Activated CD4-positive, alpha-beta T cell treated with anti-CD3 and anti-CD28 coated beads for 36 hours (primary cell): ENCODE measurements at regions of chr10 and their contacts with region 1.

Region 1: GRCh38 chr10:5283305-5284158 is 81.2 kb upstream of the UCN3 start:
- DNase-seq: peak; percentile 78
- ATAC-seq: peak; percentile 83
- H3K4me3 Mint-ChIP-seq: no peak overlapping the region
- H3K27ac Mint-ChIP-seq: peak overlapping the region; percentile 74
- H3K4me1 Mint-ChIP-seq: peaks cover 21% of the 10 kb centered on the region
- H3K27me3 Mint-ChIP-seq: peaks cover 7% of the 10 kb centered on the region

Region 2: GRCh38 chr10:4813023-4813422 is 470.5 kb before region 1 on chr10:
- CTCF ChIA-PET with region 1: interaction called, 3 read pairs
- POLR2A ChIA-PET with region 1: no interaction called
- intact Hi-C with region 1: loop called (anchors 1 to 10 kb)
- DNase-seq: peak; percentile 13
- ATAC-seq: no peak
- H3K4me3 Mint-ChIP-seq: no peak overlapping the region
- H3K27ac Mint-ChIP-seq: no peak overlapping the region
- H3K4me1 Mint-ChIP-seq: no peaks in the 10 kb centered on the region
- H3K27me3 Mint-ChIP-seq: peaks cover 6% of the 10 kb centered on the region

Region 3: DNA sequence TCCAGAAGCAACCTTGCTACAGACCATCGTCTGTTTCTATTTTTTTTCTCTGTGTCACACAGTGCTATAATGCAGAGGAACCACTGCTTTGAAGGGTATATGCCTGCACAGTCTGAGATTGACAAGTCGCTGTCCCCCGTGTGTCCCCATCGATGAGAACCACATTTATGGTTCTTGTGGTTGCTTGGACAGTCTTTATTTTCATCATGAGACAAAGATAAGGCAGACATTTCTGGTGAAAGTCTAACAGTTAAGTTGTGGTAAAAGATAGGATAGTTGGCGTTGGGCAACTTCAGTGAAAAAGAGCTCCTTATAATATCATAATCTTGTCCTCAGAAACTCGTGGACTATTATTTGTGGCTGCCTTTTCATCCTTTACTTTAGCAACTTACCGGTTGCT is 463.8 kb before region 1 on chr10:
- CTCF ChIA-PET with region 1: interaction called, 3 read pairs
- POLR2A ChIA-PET with region 1: no interaction called
- intact Hi-C with region 1: loop called (anchors 1 to 10 kb)
- DNase-seq: no peak
- ATAC-seq: no peak
- H3K4me3 Mint-ChIP-seq: no peak overlapping the region
- H3K27ac Mint-ChIP-seq: no peak overlapping the region
- H3K4me1 Mint-ChIP-seq: no peaks in the 10 kb centered on the region
- H3K27me3 Mint-ChIP-seq: peaks cover 6% of the 10 kb centered on the region

Region 4: DNA sequence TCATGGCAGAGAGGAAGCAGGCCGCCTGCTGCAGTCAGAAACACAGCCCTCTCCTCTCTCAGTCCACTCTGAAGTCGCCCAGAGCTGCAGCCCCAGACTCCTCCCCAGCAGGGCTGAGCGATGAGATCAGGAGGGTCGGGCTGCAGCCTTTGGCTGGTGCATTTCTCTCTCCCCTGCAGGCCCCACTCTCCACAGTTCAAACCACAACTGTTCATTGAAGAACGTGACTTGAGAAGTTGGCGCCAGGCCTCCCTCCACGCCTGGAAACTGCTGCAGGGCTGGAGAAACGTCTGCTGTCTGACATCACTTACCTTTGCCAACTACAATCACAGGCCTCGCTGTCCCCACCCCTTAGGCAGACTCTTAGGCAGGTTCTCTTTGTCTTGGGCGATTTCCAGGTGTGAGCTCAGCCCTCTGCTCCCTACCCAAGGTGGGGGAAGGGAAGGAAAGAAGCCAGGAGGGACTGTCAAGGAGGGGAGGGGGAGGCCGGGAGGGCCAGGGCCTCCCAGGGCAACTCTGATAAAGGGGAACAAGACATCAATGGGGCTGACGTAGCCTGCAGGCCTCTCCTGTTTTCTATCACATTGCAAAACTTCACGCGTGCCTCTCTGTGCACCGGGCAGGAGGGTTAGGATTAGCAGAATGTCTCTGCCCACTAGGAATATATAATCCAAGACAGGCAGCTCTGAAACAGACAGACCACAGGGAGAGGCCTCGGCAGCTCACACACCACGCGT is 183.1 kb after region 1 on chr10:
- CTCF ChIA-PET with region 1: no interaction called
- POLR2A ChIA-PET with region 1: no interaction called
- intact Hi-C with region 1: no loop called
- DNase-seq: no peak
- ATAC-seq: no peak
- H3K4me3 Mint-ChIP-seq: no peak overlapping the region
- H3K27ac Mint-ChIP-seq: no peak overlapping the region
- H3K4me1 Mint-ChIP-seq: peaks cover 5% of the 10 kb centered on the region
- H3K27me3 Mint-ChIP-seq: no peaks in the 10 kb centered on the region